ENCODE measurements at regions of chr17 and their contacts with region 1.

Region 1: GRCh38 chr17:39164675-39165143 is 1.3 kb downstream of the ARL5C start:
- DNase-seq: peak; percentile 83
- H3K4me3 Mint-ChIP-seq: peak overlapping the region; percentile 84
- H3K27ac Mint-ChIP-seq: no peak overlapping the region
- H3K4me1 Mint-ChIP-seq: peaks cover 14% of the 10 kb centered on the region
- H3K27me3 Mint-ChIP-seq: peaks cover 37% of the 10 kb centered on the region

Region 2: GRCh38 chr17:39144416-39144840 is 20.3 kb before region 1 on chr17:
- CTCF ChIA-PET with region 1: interaction called, 124 read pairs
- POLR2A ChIA-PET with region 1: no interaction called
- intact Hi-C with region 1: no loop called
- DNase-seq: no peak
- H3K4me3 Mint-ChIP-seq: no peak overlapping the region
- H3K27ac Mint-ChIP-seq: no peak overlapping the region
- H3K4me1 Mint-ChIP-seq: no peaks in the 10 kb centered on the region
- H3K27me3 Mint-ChIP-seq: no peaks in the 10 kb centered on the region

Region 3: DNA sequence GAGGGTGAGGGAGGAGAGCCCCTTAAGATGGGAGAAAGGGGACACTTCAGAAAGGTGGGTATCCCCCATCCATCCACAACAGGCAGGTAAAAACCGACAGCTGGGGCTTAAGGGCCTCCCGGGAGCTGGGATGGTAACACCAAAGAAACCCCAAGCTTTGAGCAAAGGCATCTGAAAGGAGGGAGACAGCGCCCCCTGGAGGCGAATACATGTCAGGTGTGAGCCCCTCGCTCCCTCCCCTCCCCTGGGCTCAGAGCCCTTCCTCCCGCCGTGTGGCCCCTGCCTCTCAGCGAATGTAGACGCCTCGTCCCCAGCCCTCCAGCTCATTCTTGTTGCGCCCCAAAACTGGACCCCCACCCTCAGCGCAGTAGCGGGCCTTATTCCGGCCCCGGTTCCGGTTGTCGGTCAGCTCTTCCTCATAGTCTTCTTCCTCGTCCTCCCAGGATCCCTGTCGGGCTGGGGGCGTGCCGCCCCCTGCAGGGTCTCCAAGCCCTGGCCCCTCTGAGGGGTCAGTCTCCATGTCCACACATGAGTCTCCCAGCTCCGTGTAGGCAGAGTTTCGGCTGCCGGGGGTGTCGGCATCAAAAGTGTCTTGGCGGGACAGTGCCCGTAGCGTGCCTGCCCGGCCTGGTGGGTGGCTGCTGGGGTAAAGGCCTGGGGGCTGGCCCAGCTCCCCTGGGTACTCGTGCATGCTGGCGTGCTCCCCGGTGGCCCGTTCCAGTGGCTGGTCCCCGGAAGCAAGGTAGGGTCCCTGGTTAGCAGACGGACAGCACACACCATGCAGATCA is 10.4 kb after region 1 on chr17:
- CTCF ChIA-PET with region 1: interaction called, 107 read pairs
- POLR2A ChIA-PET with region 1: interaction called, 3 read pairs
- intact Hi-C with region 1: no loop called
- DNase-seq: peak; percentile 80
- H3K4me3 Mint-ChIP-seq: no peak overlapping the region
- H3K27ac Mint-ChIP-seq: no peak overlapping the region
- H3K4me1 Mint-ChIP-seq: no peaks in the 10 kb centered on the region
- H3K27me3 Mint-ChIP-seq: no peaks in the 10 kb centered on the region

Region 4: DNA sequence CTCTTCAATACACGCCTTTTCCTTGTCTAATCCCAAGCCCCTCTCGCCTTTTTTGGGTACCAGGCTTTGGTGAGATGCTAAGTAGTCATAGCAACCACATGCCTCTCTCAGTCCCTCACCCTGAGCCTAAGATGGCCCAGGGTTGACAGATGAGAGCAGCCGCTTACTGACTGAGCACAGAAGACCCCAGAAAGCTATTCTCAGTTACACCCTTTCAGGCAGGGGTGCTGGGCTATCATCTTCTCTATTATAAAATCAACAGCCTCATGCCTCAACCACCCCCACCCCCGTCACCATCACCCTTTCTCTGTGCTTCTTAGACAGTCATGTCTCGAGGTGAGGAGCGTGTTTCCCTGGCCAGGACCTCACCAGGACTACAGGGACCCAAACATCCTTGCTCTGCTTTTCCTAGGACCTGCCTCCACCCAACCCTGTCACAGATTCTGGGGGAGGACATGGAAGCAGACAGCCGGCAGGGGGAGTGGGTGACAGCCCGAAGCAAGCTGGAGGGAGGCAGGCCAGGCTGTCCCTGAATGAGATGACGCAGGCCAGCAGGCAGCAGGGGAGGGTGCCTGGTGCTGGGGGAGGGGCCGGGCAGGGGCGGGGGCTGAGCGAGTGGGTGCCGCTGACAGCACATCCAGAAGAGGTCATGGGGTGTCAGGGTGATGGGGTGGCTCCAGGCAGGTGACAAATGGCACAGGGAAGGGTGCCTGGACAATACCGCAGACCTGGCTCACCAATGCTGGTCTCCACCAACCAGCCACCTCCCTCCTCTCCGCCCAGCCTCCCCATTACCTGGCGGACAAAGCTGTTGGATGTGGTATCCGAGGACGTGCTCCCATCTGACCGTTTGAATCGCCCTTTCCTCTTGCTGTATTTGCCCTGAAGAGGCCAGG is 29.6 kb after region 1 on chr17:
- CTCF ChIA-PET with region 1: interaction called, 11 read pairs
- POLR2A ChIA-PET with region 1: no interaction called
- intact Hi-C with region 1: no loop called
- DNase-seq: no peak
- H3K4me3 Mint-ChIP-seq: no peak overlapping the region
- H3K27ac Mint-ChIP-seq: no peak overlapping the region
- H3K4me1 Mint-ChIP-seq: peaks cover 35% of the 10 kb centered on the region
- H3K27me3 Mint-ChIP-seq: no peaks in the 10 kb centered on the region

Region 5: DNA sequence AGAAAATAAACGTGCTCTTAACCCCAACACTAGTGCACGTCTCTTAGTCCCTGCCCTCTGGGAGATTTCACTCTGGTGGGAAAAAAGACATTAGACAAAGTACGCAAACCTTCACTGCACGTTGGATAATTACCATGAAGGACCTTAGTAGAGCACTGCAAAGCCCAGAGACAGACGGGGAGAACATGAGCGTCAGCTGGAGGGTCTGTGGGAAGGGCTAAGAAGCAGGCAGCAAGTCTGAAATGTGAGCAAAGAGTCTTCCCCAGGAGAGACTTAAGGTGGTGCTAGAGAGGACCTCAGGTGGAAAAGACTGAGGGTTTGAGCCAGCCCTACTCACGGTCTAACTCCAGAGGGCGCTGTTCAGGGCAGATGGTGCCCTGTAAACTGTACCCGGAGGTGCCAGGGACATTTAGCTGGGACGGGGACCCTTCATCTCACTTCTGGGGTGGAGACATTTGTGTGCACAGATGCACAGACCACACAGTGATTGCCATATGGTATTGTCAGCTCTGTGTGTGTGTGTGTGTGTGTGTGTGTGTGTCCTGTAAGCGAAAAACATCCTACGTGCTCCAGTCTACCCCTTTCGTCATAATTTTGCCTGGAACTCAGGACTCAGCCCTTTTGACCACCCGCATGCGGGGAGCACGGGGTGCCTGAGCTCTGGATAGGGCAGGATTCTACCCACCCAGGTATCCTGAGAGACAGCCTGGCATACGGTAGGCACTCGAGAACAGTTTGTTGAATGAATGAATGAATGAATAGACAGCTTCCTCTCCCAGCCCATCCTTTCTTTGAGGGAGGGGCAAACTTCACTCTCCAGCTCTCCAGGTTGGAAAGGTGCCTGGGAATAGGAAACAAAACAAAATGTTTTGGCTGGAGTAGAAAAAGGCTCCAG is 71.1 kb after region 1 on chr17:
- CTCF ChIA-PET with region 1: interaction called, 17 read pairs
- POLR2A ChIA-PET with region 1: no interaction called
- intact Hi-C with region 1: no loop called
- DNase-seq: peak; percentile 73
- H3K4me3 Mint-ChIP-seq: no peak overlapping the region
- H3K27ac Mint-ChIP-seq: no peak overlapping the region
- H3K4me1 Mint-ChIP-seq: peaks cover 29% of the 10 kb centered on the region
- H3K27me3 Mint-ChIP-seq: peaks cover 11% of the 10 kb centered on the region

Region 6: GRCh38 chr17:39244600-39245570 is 80.2 kb after region 1 on chr17:
- CTCF ChIA-PET with region 1: interaction called, 39 read pairs
- POLR2A ChIA-PET with region 1: no interaction called
- intact Hi-C with region 1: no loop called
- DNase-seq: peak; percentile 91
- H3K4me3 Mint-ChIP-seq: no peak overlapping the region
- H3K27ac Mint-ChIP-seq: no peak overlapping the region
- H3K4me1 Mint-ChIP-seq: peaks cover 5% of the 10 kb centered on the region
- H3K27me3 Mint-ChIP-seq: no peaks in the 10 kb centered on the region

Region 7: DNA sequence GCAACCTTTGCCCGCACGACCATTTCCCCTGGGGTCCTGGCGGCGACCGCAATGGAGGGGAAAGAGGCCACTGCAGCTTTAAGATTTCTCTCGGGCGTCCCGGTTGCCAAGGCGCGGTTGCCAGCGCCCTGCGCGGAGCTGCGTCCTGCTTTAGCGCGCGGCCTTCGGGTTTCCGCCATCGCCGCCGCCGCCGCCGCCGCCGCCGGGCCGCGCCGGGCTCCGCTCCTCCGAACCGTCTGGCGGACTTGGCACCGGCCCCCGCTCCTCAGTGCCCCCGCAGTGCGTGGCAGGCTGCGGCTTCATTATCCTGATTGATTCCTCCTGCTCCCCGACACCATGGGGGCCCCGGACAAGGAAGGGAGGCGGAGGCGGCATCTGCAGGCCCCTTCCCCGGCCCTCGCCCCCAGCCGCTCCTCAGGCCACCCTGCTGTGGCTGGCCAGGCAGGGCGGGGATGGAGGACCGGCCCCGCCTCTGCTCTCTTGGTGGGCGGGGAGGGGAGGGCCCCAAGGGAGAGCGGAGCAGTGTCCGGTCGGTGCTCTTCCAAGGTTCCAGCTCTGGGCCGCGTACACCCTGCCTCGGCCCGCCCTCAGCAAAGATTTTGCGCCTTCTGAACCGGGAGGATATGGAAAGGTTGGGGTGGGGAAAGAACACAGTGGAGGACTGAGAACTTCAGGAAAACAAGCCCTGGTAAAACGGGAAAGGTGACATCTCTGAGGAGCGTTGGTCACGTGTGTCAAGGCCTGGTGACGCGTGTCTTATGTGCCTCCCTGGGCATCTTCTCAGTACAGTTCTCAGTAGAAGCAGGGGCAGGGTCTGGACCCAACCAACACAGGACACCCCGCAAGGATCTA is 409.0 kb after region 1 on chr17:
- CTCF ChIA-PET with region 1: no interaction called
- POLR2A ChIA-PET with region 1: no interaction called
- intact Hi-C with region 1: no loop called
- DNase-seq: peak; percentile 58
- H3K4me3 Mint-ChIP-seq: peak overlapping the region; percentile 78
- H3K27ac Mint-ChIP-seq: no peak overlapping the region
- H3K4me1 Mint-ChIP-seq: peaks cover 7% of the 10 kb centered on the region
- H3K27me3 Mint-ChIP-seq: peaks cover 4% of the 10 kb centered on the region